Cardiac septum (tissue), 1 donor: ENCODE measurements at regions of chr9 and their contacts with region 1.

Region 1: GRCh38 chr9:137223078-137223970 is 1.3 kb upstream of the RNF208 start:
- DNase-seq: peak; percentile 97

Region 2: GRCh38 chr9:137116728-137117127 is 106.6 kb before region 1 on chr9:
- intact Hi-C with region 1: loop called (anchors 1 kb)
- DNase-seq: no peak

Region 3: DNA sequence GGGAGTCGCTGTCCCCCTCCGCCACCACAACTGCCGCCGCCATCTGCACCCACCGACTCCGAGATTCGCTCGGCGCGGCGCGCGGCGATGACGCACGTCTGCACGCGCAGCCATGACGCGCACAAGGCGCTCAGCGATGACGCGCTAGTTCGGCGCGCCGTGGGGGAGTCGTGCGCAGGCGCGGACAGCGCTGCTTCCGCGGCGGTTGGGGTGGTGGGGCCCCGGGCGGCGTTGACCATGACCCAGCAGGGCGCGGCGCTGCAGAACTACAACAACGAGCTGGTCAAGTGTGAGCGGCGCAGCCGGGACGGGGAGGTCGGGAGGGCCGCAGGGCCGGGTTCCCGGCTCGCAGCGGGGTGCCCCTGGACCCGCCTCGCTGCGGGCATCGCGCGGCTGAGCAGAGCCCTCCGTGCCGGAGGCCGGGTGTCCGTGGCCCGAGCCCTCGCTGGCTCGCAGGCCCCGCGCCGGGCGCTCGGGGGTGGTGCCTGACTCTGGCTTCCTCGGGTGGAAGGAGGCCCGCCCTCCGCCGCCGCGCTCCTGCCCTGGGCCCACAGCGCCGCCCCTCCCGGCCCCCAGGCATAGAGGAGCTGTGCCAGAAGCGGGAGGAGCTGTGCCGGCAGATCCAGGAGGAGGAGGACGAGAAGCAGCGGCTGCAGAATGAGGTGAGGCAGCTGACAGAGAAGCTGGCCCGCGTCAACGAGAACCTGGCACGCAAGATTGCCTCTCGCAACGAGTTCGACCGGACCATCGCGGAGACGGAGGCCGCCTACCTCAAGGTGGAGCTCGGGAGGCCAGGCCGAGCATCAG is 34.6 kb before region 1 on chr9 and contains the starts of genes ANAPC2 and SSNA1:
- intact Hi-C with region 1: loop called (anchors 2 kb)
- DNase-seq: peak; percentile 95
- total RNA-seq, gene ANAPC2: 32.5 TPM
- total RNA-seq, gene SSNA1: 59.5 TPM

Region 4: GRCh38 chr9:137200311-137201204 is 22.8 kb before region 1 on chr9 and contains the start of gene TPRN:
- intact Hi-C with region 1: loop called (anchors 2 kb)
- DNase-seq: peak; percentile 99
- total RNA-seq, gene TPRN: 13.5 TPM

Region 5: GRCh38 chr9:137240861-137241489 is 17.7 kb after region 1 on chr9 and contains the start of gene TUBB4B:
- intact Hi-C with region 1: loop called (anchors 2 kb)
- DNase-seq: peak; percentile 99
- total RNA-seq, gene TUBB4B: 304 TPM

Region 6: GRCh38 chr9:137254624-137255447 is 31.5 kb after region 1 on chr9 and contains the start of gene NELFB:
- intact Hi-C with region 1: loop called (anchors 1 kb)
- DNase-seq: peak; percentile 98
- total RNA-seq, gene NELFB: 37.2 TPM